ENCODE measurements at regions of chr5 and their contacts with region 1.

Region 1: DNA sequence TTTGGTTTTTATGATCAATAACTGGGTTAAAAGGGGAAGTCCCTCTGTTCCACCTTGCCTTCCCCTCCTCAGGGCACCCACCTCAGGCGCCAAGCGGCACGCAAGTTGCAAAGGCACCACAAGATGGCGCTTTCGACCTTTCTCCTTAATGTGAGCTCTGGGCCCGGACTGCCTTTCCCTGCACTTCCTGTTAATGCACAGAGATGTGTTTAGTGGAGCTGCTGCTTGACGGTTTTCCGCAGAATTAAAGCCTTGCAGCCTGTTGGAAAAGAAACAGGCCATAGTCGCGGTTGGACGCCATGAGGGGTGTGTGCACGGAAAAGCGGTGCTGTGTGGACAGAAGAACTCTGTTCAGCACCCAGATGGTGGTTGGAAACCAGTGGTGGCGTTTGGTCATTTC is 17.9 kb downstream of the CXCL14 start:
- DNase-seq: peak; percentile 69

Region 2: GRCh38 chr5:135466178-135467050 is 94.4 kb before region 1 on chr5:
- in situ Hi-C with region 1: loop called (anchors 25 kb)
- DNase-seq: peak; percentile 38

Measured in Caki2 (cell line).